ENCODE measurements at regions of chr15 and their contacts with region 1.

Region 1: DNA sequence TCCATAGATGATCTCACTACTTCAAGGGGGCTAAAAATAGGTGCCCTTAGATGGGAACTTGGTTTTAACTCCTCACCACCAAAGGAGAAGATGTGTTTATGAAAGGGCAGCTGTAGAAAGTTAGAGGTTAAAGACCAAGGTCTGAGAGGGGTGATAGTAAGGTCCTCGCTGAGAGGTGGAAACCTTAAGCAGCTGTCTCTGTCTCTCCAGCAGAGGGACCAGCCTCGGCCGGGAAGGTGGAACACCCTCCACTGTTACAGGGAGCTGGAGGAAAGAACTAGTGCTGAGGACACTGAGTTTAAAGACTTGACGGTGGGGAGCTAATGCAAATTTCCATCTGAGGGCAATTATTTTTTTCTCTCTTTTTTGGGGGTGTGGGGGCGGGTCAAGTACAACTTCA is 8.9 kb upstream of the RLBP1 start:
- DNase-seq: no peak
- ATAC-seq: peak; percentile 79
- H3K4me3 Mint-ChIP-seq: no peak overlapping the region
- H3K27ac Mint-ChIP-seq: no peak overlapping the region
- H3K4me1 Mint-ChIP-seq: no peaks in the 10 kb centered on the region; the same call in 1 of the 2 replicates
- H3K27me3 Mint-ChIP-seq: peaks cover 9% of the 10 kb centered on the region
- CTCF ChIP-seq: no peak

Region 2: DNA sequence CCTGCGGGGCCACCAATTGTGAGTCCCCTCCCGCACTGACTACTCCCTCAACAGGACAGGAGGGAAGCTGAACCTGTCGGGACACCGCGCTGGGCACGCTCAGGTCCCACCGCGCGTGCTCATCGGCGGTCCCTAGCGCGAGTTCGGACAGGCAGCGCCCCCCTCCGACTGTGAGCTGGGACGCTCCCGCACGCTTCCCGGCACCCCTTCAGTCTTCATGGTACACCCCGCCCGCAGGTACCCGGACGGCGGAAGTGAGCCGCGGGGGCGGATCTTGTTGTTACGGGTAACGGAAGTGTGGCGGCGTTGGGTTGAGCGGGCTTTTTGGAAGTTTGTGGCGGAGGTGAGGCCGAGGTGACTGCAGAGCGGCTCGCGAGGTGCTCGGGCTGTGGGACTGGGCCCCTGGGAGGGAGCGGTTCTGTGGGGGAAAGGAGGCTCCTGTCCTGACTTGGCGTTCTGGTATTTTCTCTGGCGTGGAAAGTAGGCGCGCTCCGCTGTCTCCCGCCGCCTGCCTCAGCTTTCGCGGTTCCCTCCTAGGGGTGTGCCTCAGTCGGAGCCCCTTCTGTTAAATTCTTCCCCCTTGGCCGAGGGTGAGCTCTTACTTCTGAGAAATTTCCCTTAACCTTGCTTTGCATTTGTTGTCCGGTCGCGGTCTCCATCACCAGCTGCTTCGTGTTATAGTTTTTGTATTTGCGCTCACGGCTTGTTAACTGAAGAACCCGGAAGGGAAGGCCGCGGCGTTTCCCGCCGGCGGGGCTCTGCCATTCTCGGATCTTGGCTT is 13.6 kb after region 1 on chr15 and contains the start of gene FANCI:
- CTCF ChIA-PET with region 1: interaction called, 14 read pairs
- POLR2A ChIA-PET with region 1: no interaction called
- DNase-seq: peak; percentile 98
- ATAC-seq: peak; percentile 96
- H3K4me3 Mint-ChIP-seq: peak within 1 kb of the TSS; percentile 97
- H3K27ac Mint-ChIP-seq: peak within 1 kb of the TSS; percentile 88
- H3K4me1 Mint-ChIP-seq: peaks cover 25% of the 10 kb centered on the region
- H3K27me3 Mint-ChIP-seq: peaks cover 23% of the 10 kb centered on the region
- CTCF ChIP-seq: 0 out of 2 replicates have a peak, but pooled peaks have one; percentile 25
- total RNA-seq, gene FANCI: 94.5 to 108 TPM (median 101 TPM) in 3 replicates